Mammary epithelial cell (primary cell): ENCODE measurements at regions of chr11 and their contacts with region 1.

Region 1: DNA sequence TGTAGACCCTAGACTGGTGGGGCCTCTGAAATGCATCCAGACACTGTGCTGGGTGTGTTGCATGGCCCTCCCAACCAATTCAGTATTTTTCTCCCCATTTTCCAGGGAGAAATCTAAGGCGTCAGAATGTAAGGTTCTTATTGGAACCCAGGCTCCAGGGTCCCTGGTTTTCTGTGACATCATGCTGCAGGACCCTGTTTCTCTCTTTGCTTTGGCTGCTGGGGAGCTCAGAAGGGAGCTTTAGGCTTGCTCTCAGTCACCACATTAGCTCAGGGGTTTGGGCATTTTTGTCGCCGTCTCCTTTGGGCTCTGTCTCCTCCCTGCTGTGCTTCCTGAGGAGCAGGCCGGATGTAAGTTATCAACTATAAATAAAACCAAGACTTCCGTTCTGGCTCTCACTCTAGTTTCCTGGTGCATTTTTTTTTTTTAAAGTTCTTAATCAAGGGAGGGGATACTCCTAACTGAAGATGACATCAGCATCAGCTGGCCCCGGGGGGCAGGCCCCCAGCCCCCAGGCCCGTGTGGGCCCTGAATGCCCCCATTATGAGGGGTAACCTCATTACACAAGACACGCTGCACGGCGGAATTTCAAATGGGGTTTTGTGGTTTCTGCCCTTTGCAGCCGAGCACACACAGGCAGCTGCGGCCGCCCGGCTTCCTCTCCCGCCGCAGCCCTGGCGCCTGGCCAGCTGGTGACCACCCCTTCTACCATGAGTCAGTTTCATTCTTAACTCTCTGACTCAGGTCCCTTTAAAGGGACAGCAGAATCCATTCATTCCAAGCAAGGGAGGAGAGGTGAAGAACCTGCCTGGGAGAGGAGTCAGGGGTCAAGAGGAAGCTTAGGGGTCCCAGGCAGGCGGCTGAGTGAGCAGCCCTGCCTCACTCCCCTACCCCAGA is 3.2 kb downstream of the MYEOV start:
- DNase-seq: peak; percentile 99
- H3K4me3 ChIP-seq: no peak overlapping the region
- H3K27ac ChIP-seq: peak overlapping the region; percentile 92
- H3K4me1 ChIP-seq: peaks cover 66% of the 10 kb centered on the region
- H3K27me3 ChIP-seq: no peaks in the 10 kb centered on the region
- CTCF ChIP-seq: no peak

Region 2: GRCh38 chr11:69101115-69101791 is 195.9 kb before region 1 on chr11:
- CTCF ChIA-PET with region 1: interaction called, 3 read pairs
- dilution Hi-C with region 1: loop called (anchors 25 kb)
- in situ Hi-C with region 1: no loop called
- intact Hi-C with region 1: loop called (anchors 2 kb)
- DNase-seq: peak; percentile 74
- H3K4me3 ChIP-seq: no peak overlapping the region
- H3K27ac ChIP-seq: no peak overlapping the region
- H3K4me1 ChIP-seq: peaks cover 3% of the 10 kb centered on the region
- H3K27me3 ChIP-seq: no peaks in the 10 kb centered on the region
- CTCF ChIP-seq: peak; percentile 97 to 100

Region 3: GRCh38 chr11:69280994-69281393 is 16.1 kb before region 1 on chr11:
- CTCF ChIA-PET with region 1: no interaction called
- dilution Hi-C with region 1: no loop called
- in situ Hi-C with region 1: no loop called
- intact Hi-C with region 1: loop called (anchors 2 kb)
- DNase-seq: peak; percentile 96
- H3K4me3 ChIP-seq: no peak overlapping the region
- H3K27ac ChIP-seq: peak overlapping the region; percentile 93
- H3K4me1 ChIP-seq: peaks cover 28% of the 10 kb centered on the region
- H3K27me3 ChIP-seq: no peaks in the 10 kb centered on the region
- CTCF ChIP-seq: no peak

Region 4: GRCh38 chr11:69419662-69420395 is 122.7 kb after region 1 on chr11:
- CTCF ChIA-PET with region 1: no interaction called
- dilution Hi-C with region 1: no loop called
- in situ Hi-C with region 1: no loop called
- intact Hi-C with region 1: loop called (anchors 5 kb)
- DNase-seq: no peak
- H3K4me3 ChIP-seq: no peak overlapping the region
- H3K27ac ChIP-seq: peak overlapping the region; percentile 79
- H3K4me1 ChIP-seq: peaks cover 18% of the 10 kb centered on the region
- H3K27me3 ChIP-seq: no peaks in the 10 kb centered on the region
- CTCF ChIP-seq: no peak

Region 5: DNA sequence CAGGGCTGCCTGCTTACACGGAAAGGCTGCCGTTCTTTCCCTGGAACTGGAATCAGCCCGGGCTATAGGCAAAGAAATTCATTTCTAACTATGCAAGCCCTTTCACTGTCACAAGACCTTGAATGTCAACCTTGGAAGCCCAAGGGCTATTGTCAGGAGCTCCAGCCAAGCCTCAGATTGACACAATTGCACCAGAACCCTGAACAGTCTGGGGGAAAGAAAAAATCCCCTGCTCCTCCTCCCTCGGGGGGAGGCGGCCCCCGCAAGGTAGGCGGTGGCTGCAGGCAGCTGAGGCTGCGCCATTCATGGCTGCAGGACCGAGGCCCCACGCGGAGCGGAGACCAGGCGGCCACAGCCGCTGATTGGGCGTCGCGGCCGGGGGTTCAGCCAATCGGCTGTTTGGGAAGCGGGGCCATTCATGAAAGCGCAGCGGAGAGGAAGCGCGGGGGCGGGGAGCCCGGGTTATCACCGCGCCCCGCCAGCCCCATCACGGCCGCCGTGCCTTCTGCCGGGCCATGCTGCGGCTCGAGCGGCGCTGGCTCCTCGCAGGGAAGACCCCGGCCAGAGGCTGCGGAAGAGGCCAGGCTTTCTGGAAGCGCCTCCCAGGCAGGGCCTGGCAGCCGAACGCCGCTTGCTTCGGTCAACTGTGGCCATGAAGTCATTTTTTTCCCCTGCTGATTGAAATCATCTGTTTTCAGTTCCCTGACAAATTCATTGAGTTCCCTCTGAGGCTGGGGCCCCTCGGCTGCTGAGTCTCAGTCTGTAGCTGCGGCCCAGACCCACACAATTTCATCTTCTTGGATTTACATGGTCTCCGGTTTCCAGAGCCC is 146.2 kb after region 1 on chr11:
- CTCF ChIA-PET with region 1: interaction called, 3 read pairs
- dilution Hi-C with region 1: loop called (anchors 5 kb)
- in situ Hi-C with region 1: no loop called
- intact Hi-C with region 1: no loop called
- DNase-seq: peak; percentile 87
- H3K4me3 ChIP-seq: peak overlapping the region in 2 of 3 experiments; percentile 32 to 40
- H3K27ac ChIP-seq: peak overlapping the region; percentile 39
- H3K4me1 ChIP-seq: peaks cover 43% of the 10 kb centered on the region
- H3K27me3 ChIP-seq: no peaks in the 10 kb centered on the region
- CTCF ChIP-seq: no peak

Region 6: DNA sequence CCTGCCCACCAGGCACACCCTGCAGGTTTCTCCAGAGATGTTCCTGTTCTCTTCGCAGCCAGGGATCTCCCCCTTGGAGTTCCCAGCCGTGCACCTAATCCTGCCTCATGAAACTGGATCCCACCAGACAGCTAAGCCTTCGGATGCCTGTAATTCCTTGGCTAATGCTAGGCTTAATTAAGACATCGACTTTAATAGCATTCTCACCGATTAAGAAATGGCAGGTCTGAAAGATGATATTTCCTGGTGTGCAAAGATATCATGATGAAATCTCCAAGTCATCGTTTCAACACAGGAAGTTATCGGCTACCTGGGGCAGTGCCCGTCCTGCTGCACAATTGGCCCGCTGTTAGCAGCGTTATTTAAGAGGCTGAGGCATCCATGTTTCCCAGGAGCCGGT is 302.4 kb after region 1 on chr11:
- CTCF ChIA-PET with region 1: no interaction called
- dilution Hi-C with region 1: no loop called
- in situ Hi-C with region 1: no loop called
- intact Hi-C with region 1: loop called (anchors 1 kb)
- DNase-seq: no peak
- H3K4me3 ChIP-seq: no peak overlapping the region
- H3K27ac ChIP-seq: no peak overlapping the region
- H3K4me1 ChIP-seq: peaks cover 7% of the 10 kb centered on the region
- H3K27me3 ChIP-seq: no peaks in the 10 kb centered on the region
- CTCF ChIP-seq: no peak